ENCODE measurements at regions of chr5 and their contacts with region 1.

Region 1: DNA sequence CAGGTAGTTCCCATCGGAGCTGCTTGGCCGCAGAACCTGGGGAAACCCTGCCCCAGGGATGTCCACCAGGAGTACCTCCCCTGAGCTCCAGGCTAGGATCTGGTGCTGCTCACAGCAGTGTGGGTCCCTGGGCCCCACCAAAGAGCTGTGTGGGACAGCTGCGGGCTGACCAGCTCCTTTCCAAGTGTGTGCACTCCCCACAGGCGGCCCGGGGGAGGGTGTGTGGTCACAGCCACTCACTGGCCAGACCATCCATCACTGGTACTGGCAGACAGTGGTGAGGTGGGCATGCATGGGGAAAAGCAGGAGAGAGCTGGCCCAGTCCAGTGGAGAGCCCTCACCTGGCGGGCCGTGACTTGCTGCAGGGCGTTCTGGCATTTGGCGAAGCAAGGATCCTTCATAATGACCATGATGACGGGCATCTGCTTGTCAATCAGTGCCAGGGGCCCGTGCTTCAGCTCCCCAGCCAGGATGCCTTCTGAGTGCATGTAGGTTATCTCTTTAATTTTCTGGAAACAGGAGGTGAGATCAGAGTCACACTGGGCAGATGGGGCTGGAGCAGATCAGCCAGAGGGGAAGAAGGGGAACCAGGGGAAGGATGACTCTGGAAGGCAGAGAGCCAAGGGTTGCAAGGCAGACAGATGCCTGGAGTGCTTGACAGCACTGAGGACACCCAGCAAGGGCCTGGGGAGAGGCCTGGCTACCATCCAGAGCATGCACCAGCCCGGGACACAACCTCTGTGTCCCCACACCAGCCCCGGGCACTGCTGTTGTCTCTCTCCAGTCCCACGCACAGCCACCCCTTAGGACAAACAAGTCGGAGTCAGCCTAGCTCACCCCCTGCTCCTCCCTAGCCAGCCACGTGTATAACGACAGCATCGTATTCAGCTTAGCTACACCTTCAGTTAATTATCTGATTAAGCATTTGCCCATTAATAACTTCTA is 12.8 kb upstream of the MAPK9 start:
- DNase-seq: no peak
- H3K4me3 Mint-ChIP-seq: no peak overlapping the region
- H3K27ac Mint-ChIP-seq: no peak overlapping the region
- H3K4me1 Mint-ChIP-seq: no peaks in the 10 kb centered on the region
- H3K27me3 Mint-ChIP-seq: peaks cover 14% of the 10 kb centered on the region

Region 2: GRCh38 chr5:180315762-180316212 is 11.1 kb after region 1 on chr5:
- CTCF ChIA-PET with region 1: interaction called, 24 read pairs
- DNase-seq: peak; percentile 80
- H3K4me3 Mint-ChIP-seq: no peak overlapping the region
- H3K27ac Mint-ChIP-seq: no peak overlapping the region
- H3K4me1 Mint-ChIP-seq: peaks cover 15% of the 10 kb centered on the region
- H3K27me3 Mint-ChIP-seq: peaks cover 5% of the 10 kb centered on the region